Keratinocyte (primary cell): ENCODE measurements at regions of chr13 and their contacts with region 1.

Region 1: GRCh38 chr13:20828539-20829364 is 55.0 kb upstream of the EEF1AKMT1 start:
- DNase-seq: no peak
- H3K4me3 ChIP-seq: peak overlapping the region in 2 of 3 experiments; percentile 41 to 50
- H3K27ac ChIP-seq: peak overlapping the region; percentile 15
- H3K4me1 ChIP-seq: no peaks in the 10 kb centered on the region
- H3K27me3 ChIP-seq: no peaks in the 10 kb centered on the region
- CTCF ChIP-seq: peak in 2 of 3 experiments; percentile 63 to 70

Region 2: GRCh38 chr13:20969182-20969581 is 140.4 kb after region 1 on chr13:
- dilution Hi-C with region 1: loop called (anchors 25 kb)
- DNase-seq: no peak
- H3K4me3 ChIP-seq: no peak overlapping the region
- H3K27ac ChIP-seq: no peak overlapping the region
- H3K4me1 ChIP-seq: no peaks in the 10 kb centered on the region
- H3K27me3 ChIP-seq: no peaks in the 10 kb centered on the region
- CTCF ChIP-seq: no peak

Region 3: DNA sequence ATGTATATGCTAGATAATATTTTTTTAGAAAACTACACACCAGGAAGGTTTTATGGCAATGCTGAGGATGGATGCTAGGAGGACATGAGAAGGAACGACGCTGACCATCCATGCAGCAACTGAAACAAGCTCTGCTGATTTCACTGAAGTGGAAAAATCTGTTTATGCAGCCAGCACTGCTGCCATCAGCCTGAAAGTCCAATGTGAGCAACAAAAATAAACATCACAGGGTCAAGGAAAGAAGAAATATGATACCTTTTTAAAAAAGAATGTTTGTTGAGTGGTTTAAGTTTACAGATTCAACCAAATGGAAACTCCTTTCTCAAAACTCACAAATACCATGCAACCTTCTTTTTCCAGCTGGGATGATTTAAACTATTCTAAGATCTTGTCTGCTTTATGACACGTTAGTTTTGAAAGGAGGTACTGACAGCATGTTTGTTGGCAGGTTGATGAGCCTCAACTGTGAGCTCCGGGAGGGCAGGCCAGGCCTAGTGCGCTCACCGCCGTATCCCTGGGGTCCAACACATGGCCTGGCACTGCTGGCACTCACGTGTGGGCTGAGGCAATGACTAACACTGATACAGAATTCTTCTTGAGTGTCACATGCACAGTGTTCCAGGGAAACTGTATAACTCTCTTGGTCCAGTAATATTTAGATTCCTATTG is 185.9 kb after region 1 on chr13:
- dilution Hi-C with region 1: no loop called
- DNase-seq: no peak
- H3K4me3 ChIP-seq: no peak overlapping the region
- H3K27ac ChIP-seq: no peak overlapping the region
- H3K4me1 ChIP-seq: peaks cover 22% of the 10 kb centered on the region
- H3K27me3 ChIP-seq: no peaks in the 10 kb centered on the region
- CTCF ChIP-seq: no peak

Region 4: DNA sequence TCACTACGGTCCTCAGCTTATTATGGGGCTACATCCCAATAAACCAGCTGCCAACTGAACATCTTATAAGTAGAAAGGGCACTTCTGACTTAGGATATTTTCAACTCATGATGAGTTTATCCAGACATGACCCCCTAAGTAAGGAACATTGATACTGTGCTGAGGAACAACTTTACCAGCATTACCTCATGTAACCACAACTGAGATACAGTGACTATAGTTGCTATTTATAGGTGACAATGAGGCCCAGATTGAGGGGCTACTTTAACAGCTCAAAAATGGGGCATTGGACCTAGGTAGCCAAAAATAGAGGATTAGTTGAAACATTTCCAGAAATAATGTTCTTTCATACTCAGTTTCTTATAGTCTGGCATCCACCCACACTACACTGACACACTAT is 320.8 kb after region 1 on chr13:
- dilution Hi-C with region 1: no loop called
- DNase-seq: no peak
- H3K4me3 ChIP-seq: no peak overlapping the region
- H3K27ac ChIP-seq: no peak overlapping the region
- H3K4me1 ChIP-seq: peaks cover under 1% of the 10 kb centered on the region
- H3K27me3 ChIP-seq: no peaks in the 10 kb centered on the region
- CTCF ChIP-seq: no peak